ENCODE measurements at regions of chr14 and their contacts with region 1.

Region 1: GRCh38 chr14:69818757-69819191 is 21.7 kb upstream of the SLC10A1 start:
- DNase-seq: peak; percentile 66
- ATAC-seq: peak; percentile 97
- H3K4me3 ChIP-seq: no peak overlapping the region
- H3K27ac ChIP-seq: no peak overlapping the region
- H3K4me1 ChIP-seq: no peaks in the 10 kb centered on the region
- H3K27me3 ChIP-seq: peaks cover 25% of the 10 kb centered on the region
- CTCF ChIP-seq: peak; percentile 71 to 95 (median 88)
- POLR2A ChIP-seq: no peak
- RAD21 ChIP-seq: peak; percentile 93

Region 2: DNA sequence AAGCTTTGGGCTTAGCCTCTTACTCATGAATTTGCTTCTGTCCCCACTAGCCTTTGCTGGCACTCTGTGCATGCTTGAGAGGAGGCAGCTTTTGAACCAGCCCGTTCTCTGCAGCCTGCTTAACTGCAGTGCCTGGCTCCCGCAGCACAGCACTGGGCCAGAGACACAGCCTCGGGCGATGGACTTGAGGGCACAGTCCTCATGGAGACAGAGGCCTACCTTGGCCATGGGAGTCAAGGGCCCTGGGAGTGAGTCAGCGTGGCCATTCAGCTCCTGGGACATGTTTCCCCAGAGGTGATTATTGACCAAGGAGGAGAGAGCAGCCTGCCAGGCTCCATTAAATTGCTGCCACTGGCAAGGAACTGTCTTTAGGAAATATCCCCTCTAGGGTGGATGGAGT is 154.0 kb after region 1 on chr14:
- CTCF ChIA-PET with region 1: no interaction called
- POLR2A ChIA-PET with region 1: no interaction called
- RAD21 ChIA-PET with region 1: no interaction called
- intact Hi-C with region 1: no loop called
- DNase-seq: no peak
- ATAC-seq: no peak
- H3K4me3 ChIP-seq: no peak overlapping the region
- H3K27ac ChIP-seq: no peak overlapping the region
- H3K4me1 ChIP-seq: no peaks in the 10 kb centered on the region
- H3K27me3 ChIP-seq: peaks cover 30% of the 10 kb centered on the region
- CTCF ChIP-seq: no peak
- POLR2A ChIP-seq: no peak
- RAD21 ChIP-seq: no peak

Region 3: DNA sequence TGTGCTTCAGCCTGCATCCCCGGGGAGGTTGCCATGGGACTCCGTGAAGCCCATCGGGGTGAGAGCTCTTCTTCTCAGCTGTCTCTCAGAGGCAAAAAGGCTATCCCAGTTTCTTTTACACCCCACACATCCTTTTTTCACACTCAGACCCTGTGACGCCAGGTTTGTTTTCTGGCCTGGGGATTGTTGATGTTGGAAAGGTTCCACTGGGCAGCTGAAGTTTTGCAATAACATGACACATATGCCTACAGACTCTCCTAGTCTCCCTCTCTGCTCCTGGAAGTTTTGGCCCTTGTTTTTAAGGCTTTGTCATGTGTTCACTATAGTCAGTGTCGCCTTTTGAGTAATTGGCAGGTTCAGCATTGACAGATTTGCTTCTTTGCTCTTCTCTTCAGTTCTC is 179.1 kb after region 1 on chr14:
- CTCF ChIA-PET with region 1: no interaction called
- POLR2A ChIA-PET with region 1: no interaction called
- RAD21 ChIA-PET with region 1: no interaction called
- intact Hi-C with region 1: no loop called
- DNase-seq: no peak
- ATAC-seq: no peak
- H3K4me3 ChIP-seq: no peak overlapping the region
- H3K27ac ChIP-seq: no peak overlapping the region
- H3K4me1 ChIP-seq: no peaks in the 10 kb centered on the region
- H3K27me3 ChIP-seq: peaks cover 32% of the 10 kb centered on the region; the same call in 1 of the 2 replicates
- CTCF ChIP-seq: no peak
- POLR2A ChIP-seq: no peak
- RAD21 ChIP-seq: no peak

Region 4: GRCh38 chr14:70073924-70074566 is 255.3 kb after region 1 on chr14:
- CTCF ChIA-PET with region 1: interaction called, 19 read pairs
- POLR2A ChIA-PET with region 1: no interaction called
- RAD21 ChIA-PET with region 1: interaction called in 1 of 2 experiments, 3 read pairs
- intact Hi-C with region 1: loop called (anchors 1 kb)
- DNase-seq: peak; percentile 64
- ATAC-seq: peak; percentile 99
- H3K4me3 ChIP-seq: no peak overlapping the region
- H3K27ac ChIP-seq: no peak overlapping the region
- H3K4me1 ChIP-seq: no peaks in the 10 kb centered on the region
- H3K27me3 ChIP-seq: peaks cover 35% of the 10 kb centered on the region
- CTCF ChIP-seq: peak; percentile 79 to 98 (median 96)
- POLR2A ChIP-seq: no peak
- RAD21 ChIP-seq: peak; percentile 76

Region 5: GRCh38 chr14:70245026-70245425 is 426.3 kb after region 1 on chr14:
- CTCF ChIA-PET with region 1: no interaction called
- POLR2A ChIA-PET with region 1: no interaction called
- RAD21 ChIA-PET with region 1: no interaction called
- intact Hi-C with region 1: no loop called
- DNase-seq: no peak
- ATAC-seq: no peak
- H3K4me3 ChIP-seq: no peak overlapping the region
- H3K27ac ChIP-seq: no peak overlapping the region
- H3K4me1 ChIP-seq: no peaks in the 10 kb centered on the region
- H3K27me3 ChIP-seq: peaks cover 13% of the 10 kb centered on the region; the same call in 1 of the 2 replicates
- CTCF ChIP-seq: no peak
- POLR2A ChIP-seq: no peak
- RAD21 ChIP-seq: no peak

Region 6: GRCh38 chr14:70317969-70318634 is 499.3 kb after region 1 on chr14:
- CTCF ChIA-PET with region 1: no interaction called
- POLR2A ChIA-PET with region 1: no interaction called
- RAD21 ChIA-PET with region 1: no interaction called
- intact Hi-C with region 1: loop called (anchors 1 kb)
- DNase-seq: peak; percentile 38
- ATAC-seq: peak; percentile 87
- H3K4me3 ChIP-seq: no peak overlapping the region
- H3K27ac ChIP-seq: no peak overlapping the region
- H3K4me1 ChIP-seq: no peaks in the 10 kb centered on the region
- H3K27me3 ChIP-seq: no peaks in the 10 kb centered on the region
- CTCF ChIP-seq: peak; percentile 45 to 62 (median 51); a peak in 5 of 6 replicates
- POLR2A ChIP-seq: no peak
- RAD21 ChIP-seq: peak; percentile 73

Region 7: DNA sequence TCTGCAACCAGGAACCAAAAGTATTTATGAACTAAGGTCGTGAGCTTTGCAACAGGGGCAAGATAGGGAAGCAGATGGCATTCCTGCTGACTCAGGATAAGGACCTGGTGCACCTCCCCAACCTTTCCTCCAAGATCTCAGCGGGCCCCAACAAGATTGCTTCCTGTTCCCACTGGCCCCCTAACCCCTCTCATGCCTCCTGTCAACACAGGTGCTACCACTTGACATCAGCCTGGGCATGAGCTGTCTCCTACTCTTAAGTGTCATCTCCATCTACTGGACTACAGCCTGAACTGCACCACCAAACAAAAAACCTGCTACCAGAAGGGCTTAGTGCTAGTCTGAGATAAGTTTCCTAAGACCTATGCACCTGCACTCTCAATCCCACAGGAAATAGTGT is 749.0 kb after region 1 on chr14:
- CTCF ChIA-PET with region 1: no interaction called
- POLR2A ChIA-PET with region 1: no interaction called
- RAD21 ChIA-PET with region 1: no interaction called
- intact Hi-C with region 1: loop called (anchors 10 kb)
- DNase-seq: peak; percentile 28
- ATAC-seq: peak; percentile 91
- H3K4me3 ChIP-seq: no peak overlapping the region
- H3K27ac ChIP-seq: no peak overlapping the region
- H3K4me1 ChIP-seq: no peaks in the 10 kb centered on the region
- H3K27me3 ChIP-seq: no peaks in the 10 kb centered on the region
- CTCF ChIP-seq: peak; percentile 19 to 76 (median 72); a peak in 5 of 6 replicates
- POLR2A ChIP-seq: no peak
- RAD21 ChIP-seq: peak; percentile 61

Region 8: GRCh38 chr14:71659161-71659560 is 1840.4 kb after region 1 on chr14:
- CTCF ChIA-PET with region 1: no interaction called
- POLR2A ChIA-PET with region 1: no interaction called
- RAD21 ChIA-PET with region 1: no interaction called
- intact Hi-C with region 1: no loop called
- DNase-seq: no peak
- ATAC-seq: no peak
- H3K4me3 ChIP-seq: no peak overlapping the region
- H3K27ac ChIP-seq: no peak overlapping the region
- H3K4me1 ChIP-seq: peaks cover 2 to 15% of the 10 kb centered on the region in 2 experiments; a peak in 2 of 4 replicates
- H3K27me3 ChIP-seq: no peaks in the 10 kb centered on the region
- CTCF ChIP-seq: no peak
- POLR2A ChIP-seq: no peak
- RAD21 ChIP-seq: no peak

Measured in HCT116 (cell line).